Transverse colon (tissue), 4 donors: ENCODE measurements at regions of chr1 and their contacts with region 1.

Region 1: DNA sequence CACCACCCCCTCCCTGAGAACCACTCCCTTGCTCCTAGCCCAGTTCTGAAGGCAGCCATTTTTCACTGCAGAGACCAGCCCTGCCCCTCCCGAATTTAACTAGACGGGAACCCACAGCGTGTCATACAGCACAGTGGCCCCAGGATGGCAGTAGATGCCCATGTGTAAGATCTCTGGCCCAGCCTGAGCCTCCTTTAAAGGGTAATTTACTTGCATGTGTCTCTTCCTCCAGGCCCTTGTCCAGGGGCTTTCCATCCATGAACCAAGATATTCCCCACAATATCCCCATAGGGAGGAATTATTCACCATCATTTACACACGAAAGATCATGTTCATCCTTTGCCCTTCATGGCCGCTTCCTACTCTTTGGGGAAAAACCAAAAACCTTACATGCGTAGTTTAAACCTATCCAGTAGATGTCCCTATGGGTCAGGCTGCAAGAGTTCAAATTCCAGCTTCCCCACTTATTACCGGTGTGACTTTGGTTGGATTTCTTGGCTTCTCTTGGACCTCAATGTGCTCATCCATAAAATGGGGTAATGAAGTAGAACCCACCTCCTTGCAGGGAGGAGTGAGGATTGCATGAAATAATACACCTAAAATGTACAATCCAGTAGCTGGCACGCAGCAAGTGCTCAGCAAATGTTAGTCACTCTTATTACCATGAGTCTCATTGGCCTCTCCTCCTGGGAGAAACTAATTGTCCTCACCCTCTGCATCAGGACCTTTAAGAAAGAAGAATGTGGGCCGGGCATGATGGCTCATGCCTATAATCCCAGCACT is 4.0 kb upstream of the LACTBL1 start:
- DNase-seq: peak; percentile 63
- H3K4me3 ChIP-seq: no peak overlapping the region
- H3K27ac ChIP-seq: no peak overlapping the region
- H3K4me1 ChIP-seq: peaks cover 0 to 3% (median 0%) of the 10 kb centered on the region in 4 donors
- H3K27me3 ChIP-seq: peaks cover 8% of the 10 kb centered on the region
- CTCF ChIP-seq: peak; percentile 44 to 83 (median 72)
- EP300 ChIP-seq: no peak
- POLR2A ChIP-seq: no peak

Region 2: DNA sequence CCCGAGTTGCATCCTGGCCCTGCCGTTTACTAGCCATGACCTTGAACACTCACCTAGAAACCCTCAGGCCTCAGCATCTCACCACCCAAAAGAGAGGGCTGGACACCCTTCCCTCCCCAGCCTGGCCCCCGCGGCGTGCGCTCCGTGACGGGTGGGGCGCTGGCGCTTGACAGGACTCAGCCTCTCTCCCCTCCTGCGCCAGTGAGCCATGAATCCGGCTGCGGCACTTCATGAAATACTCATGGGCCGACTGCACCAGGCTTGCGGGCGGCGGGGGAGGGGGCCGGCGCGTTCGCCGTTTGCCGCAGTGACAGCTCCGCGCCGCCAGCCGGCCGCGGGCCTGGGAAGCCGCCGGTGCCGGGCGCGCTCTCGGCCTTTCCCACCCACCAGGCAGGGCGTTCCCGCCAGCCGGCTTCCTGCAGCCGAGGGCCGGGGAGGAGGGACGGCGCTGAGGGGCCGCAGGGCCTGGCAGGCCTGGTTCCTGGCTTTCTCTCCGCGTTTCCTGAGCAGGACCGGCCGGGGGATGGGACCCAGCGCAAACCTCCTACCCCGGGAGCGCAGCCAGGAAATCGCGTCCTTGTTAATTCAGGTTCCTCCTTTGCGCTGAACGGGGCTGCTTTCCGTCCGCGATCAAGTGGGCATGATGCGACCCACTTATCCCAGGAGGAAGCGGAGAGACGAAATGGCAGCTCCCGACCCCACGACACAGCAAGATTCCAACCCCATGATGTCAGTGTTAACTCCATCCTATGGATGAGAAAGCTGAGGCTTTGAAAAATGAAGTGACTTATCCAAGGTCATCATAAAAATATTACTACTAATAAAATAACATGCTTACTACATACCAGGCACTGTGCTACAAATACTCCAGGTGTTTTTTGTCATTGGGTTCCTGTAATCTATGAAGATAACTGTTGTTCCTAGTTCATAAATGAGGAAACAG is 201.1 kb after region 1 on chr1:
- in situ Hi-C with region 1: loop called in 3 of 4 experiments (anchors 10 to 25 kb)
- intact Hi-C with region 1: loop called (anchors 10 kb)
- DNase-seq: peak; percentile 70
- H3K4me3 ChIP-seq: peak overlapping the region; percentile 30 to 59 (median 42)
- H3K27ac ChIP-seq: peak overlapping the region; percentile 75 to 88 (median 82)
- H3K4me1 ChIP-seq: peaks cover 10 to 39% (median 18%) of the 10 kb centered on the region in 4 donors
- H3K27me3 ChIP-seq: no peaks in the 10 kb centered on the region
- CTCF ChIP-seq: peak in 3 of 5 experiments; percentile 12 to 50 (median 30)
- EP300 ChIP-seq: no peak
- POLR2A ChIP-seq: no peak